AG04450 (cell line): ENCODE measurements at regions of chr11 and their contacts with region 1.

Region 1: GRCh38 chr11:14907411-14908213 is 15.6 kb upstream of the CYP2R1 start:
- DNase-seq: no peak
- H3K4me3 ChIP-seq: no peak overlapping the region
- H3K27ac ChIP-seq: no peak overlapping the region
- H3K27me3 ChIP-seq: no peaks in the 10 kb centered on the region
- CTCF ChIP-seq: peak; percentile 66

Region 2: GRCh38 chr11:14789879-14790484 is 117.6 kb before region 1 on chr11:
- CTCF ChIA-PET with region 1: interaction called, 99 read pairs
- POLR2A ChIA-PET with region 1: no interaction called
- DNase-seq: no peak
- H3K4me3 ChIP-seq: no peak overlapping the region
- H3K27ac ChIP-seq: no peak overlapping the region
- H3K27me3 ChIP-seq: no peaks in the 10 kb centered on the region
- CTCF ChIP-seq: peak; percentile 56

Region 3: GRCh38 chr11:14886513-14886912 is 21.1 kb before region 1 on chr11:
- CTCF ChIA-PET with region 1: interaction called, 37 read pairs
- POLR2A ChIA-PET with region 1: interaction called, 4 read pairs
- DNase-seq: no peak
- H3K4me3 ChIP-seq: no peak overlapping the region
- H3K27ac ChIP-seq: no peak overlapping the region
- H3K27me3 ChIP-seq: no peaks in the 10 kb centered on the region
- CTCF ChIP-seq: no peak

Region 4: DNA sequence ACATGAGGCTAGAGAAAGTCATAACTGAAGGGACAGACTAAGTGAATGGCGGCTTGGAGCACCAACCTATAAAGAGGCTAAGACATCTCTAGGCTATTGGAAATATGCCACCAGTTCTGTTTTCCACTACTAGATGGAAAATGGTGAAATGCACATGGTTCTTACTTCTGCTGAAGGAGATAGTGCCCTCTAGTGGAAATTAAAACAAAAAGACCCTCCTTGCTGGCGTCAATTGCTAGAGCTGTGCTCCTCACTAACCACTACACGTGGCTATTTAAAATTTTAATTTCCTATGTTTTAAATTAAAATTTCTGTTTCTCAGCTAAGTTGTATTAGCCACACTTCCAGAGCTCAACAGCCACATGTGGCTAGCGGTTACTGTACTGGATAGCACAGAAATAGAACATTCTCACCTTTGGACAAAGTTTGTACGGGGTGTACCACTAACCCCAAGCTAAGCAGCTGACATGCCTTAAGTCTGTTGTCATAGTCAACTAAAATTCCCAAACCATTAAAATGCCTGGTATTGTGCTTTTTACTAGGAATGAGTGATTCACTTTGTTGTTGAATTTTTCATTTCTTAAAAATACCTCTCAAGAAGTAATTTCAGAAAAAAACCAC is 98.6 kb after region 1 on chr11:
- CTCF ChIA-PET with region 1: interaction called, 30 read pairs
- POLR2A ChIA-PET with region 1: no interaction called
- DNase-seq: no peak
- H3K4me3 ChIP-seq: no peak overlapping the region
- H3K27ac ChIP-seq: no peak overlapping the region
- H3K27me3 ChIP-seq: no peaks in the 10 kb centered on the region
- CTCF ChIP-seq: peak; percentile 50

Region 5: DNA sequence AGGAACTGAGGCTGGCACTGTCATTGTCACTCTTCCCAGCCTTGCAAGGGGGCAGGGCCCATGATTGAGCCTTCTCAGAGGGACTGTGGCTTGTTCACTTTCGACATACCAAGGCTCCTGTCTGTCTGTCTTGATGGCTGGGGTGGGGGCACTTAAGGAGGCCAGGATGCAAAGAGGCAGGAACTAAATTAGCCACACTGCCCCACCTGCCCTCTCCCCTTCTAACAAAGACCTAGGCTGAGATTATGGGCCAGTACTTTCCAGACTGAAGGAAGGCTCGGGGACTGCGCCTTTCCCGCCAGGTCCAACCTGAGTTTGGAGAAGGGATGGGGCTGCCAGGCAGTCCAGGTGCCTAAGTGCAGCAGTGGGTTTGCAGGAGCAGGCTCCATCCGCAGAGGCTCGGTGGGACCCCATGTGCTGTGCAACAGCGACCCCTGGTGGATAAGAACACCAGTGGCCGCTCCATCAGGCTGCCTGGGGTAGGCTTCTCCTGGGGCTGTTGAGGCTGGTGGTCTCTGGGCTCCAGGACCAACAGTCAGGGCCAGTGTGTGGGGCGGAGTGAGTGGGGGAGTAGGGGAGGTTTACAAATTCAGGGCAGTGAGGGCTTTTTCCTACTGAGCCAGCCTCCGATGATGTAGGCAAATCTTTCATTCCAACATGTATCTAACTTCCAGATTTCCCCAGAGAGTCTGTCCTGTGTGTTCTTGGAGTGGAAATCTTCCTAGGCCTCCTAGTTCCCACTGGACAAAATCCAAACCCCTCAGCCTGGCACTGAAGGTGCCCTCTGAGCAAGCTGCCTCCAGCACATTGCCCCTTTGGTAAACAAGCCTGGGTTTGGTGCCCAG is 301.0 kb after region 1 on chr11:
- CTCF ChIA-PET with region 1: interaction called, 28 read pairs
- POLR2A ChIA-PET with region 1: no interaction called
- DNase-seq: peak; percentile 27
- H3K4me3 ChIP-seq: no peak overlapping the region
- H3K27ac ChIP-seq: no peak overlapping the region
- H3K27me3 ChIP-seq: peaks cover 2% of the 10 kb centered on the region
- CTCF ChIP-seq: peak; percentile 91